WTC11 (cell line): ENCODE measurements at regions of chr4 and their contacts with region 1.

Region 1: DNA sequence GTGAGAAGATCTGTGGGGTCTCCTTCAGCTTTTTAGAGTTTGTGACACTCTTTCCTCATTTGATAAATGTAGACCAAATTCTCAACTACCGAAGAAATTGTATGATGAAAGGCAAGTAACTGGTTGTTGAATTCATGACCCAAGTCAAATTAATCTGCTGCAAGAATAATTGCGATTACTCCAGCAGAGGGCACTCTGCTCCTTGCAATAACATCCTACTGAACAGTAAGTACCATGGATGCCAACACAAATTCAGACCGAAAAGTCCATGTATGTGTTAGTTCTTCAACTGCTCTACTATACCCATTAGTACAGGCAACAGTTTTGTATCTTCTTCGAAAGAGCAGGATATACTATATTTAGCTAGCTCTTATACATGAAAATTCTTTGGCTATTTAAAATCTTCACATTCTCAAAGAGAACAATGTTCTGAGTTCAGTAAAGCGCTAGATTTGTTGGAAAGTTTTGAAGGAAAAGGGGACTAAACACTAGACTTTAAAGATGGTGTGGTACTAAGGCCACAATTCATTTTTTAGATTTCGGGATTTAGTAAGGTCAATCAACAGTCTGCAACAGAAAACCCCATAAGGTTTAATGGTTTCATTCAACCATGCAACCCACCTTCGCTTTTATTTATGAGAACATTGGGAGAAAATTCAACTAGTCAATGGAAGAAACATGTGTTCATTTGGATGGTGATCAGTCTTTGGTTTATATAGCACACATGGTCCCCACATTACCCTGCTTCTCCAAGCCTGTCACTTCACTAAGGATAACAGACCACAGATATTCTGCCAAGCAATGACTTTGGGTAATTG is 105.4 kb upstream of the TBC1D9 start:
- DNase-seq: peak; percentile 50
- ATAC-seq: peak; percentile 68
- H3K4me3 Mint-ChIP-seq: no peak overlapping the region
- H3K27ac Mint-ChIP-seq: no peak overlapping the region
- H3K4me1 Mint-ChIP-seq: peaks cover 6% of the 10 kb centered on the region
- H3K27me3 Mint-ChIP-seq: no peaks in the 10 kb centered on the region
- CTCF ChIP-seq: peak; percentile 51

Region 2: DNA sequence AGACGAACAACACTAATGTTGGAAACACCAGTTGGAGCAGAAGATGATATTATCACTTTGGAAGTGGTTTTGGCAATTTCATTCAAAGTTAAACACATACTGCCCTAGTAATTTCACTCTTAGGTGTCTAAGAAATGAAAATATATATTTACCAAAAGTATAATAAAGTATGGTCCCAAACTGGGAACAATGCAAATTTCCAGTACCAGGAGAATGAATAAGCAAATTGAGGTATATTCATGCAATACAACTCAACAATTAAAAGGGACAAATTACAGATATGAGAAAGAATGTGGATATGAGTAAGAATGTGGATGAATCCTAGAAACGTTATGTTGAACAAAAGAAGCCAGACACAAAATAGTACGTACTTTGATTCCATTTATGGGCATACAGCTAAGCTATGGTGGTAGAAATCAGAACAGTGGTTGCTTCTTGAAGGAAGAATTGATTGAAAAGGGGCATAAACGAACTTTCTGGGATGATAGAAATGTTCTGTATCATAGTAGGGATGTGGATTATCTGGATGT is 327.6 kb before region 1 on chr4:
- CTCF ChIA-PET with region 1: no interaction called
- POLR2A ChIA-PET with region 1: no interaction called
- DNase-seq: no peak
- ATAC-seq: no peak
- H3K4me3 Mint-ChIP-seq: no peak overlapping the region
- H3K27ac Mint-ChIP-seq: no peak overlapping the region
- H3K4me1 Mint-ChIP-seq: no peaks in the 10 kb centered on the region
- H3K27me3 Mint-ChIP-seq: no peaks in the 10 kb centered on the region
- CTCF ChIP-seq: no peak

Region 3: GRCh38 chr4:140884431-140885058 is 23.0 kb after region 1 on chr4:
- CTCF ChIA-PET with region 1: interaction called, 12 read pairs
- POLR2A ChIA-PET with region 1: no interaction called
- DNase-seq: peak; percentile 59
- ATAC-seq: peak; percentile 99
- H3K4me3 Mint-ChIP-seq: no peak overlapping the region
- H3K27ac Mint-ChIP-seq: no peak overlapping the region
- H3K4me1 Mint-ChIP-seq: 0 out of 2 replicates have a peak, but pooled peaks cover 5% of the 10 kb centered on the region
- H3K27me3 Mint-ChIP-seq: no peaks in the 10 kb centered on the region
- CTCF ChIP-seq: peak; percentile 45; the same call in 1 of the 2 replicates

Region 4: DNA sequence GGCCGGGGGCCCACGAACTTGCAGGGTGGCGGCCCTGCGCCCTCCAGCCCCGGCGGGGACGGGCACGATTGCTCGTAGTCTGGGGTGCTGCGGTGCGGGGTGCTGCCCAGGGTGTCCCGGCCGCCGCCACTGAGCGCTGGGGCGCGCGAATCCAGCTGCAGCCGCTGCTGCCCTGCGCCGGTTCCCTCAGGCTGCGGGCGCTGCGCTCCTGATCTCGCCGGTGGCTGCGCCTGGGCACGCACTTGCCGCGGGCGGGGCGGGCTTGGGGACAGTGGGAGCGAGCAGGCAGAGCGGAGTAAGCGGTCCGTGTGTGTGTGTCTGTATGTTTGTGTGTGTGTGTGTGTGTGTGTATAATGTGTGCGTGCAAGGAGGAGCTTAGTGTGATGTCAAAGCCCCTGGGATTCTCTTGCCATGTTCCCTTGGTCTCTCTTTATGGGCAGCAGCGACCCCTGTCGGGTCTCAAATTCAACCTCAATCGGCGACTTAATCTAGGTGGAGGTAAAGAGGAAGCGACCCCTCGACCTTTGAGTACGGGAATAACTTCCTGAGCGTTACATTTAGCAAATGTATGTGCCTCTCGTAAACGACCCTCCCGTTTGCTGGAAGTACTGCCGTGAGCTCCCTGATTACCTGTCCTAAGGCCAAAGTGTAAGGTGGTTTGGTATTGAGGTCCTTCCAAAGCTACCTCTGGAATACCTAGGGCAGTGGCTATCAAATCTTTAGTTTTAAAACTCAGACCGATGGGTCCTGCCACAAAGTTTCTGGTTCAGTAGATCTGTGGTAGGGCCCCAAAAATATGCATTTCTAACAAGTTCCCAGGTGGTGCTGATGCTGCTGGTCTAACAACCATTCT is 271.8 kb after region 1 on chr4 and contains the start of gene RNF150:
- CTCF ChIA-PET with region 1: interaction called, 11 read pairs
- POLR2A ChIA-PET with region 1: interaction called, 3 read pairs
- DNase-seq: peak; percentile 78
- ATAC-seq: peak; percentile 69
- H3K4me3 Mint-ChIP-seq: peak within 1 kb of the TSS; percentile 83
- H3K27ac Mint-ChIP-seq: peak within 1 kb of the TSS; percentile 58; the same call in 1 of the 2 replicates
- H3K4me1 Mint-ChIP-seq: peaks cover 28% of the 10 kb centered on the region
- H3K27me3 Mint-ChIP-seq: peaks cover 26% of the 10 kb centered on the region
- CTCF ChIP-seq: peak; percentile 48; the same call in 1 of the 2 replicates
- total RNA-seq, gene RNF150: 5.9 to 7.4 TPM (median 7.0 TPM) in 3 replicates